Caco-2 (cell line): ENCODE measurements at regions of chr11 and their contacts with region 1.

Region 1: DNA sequence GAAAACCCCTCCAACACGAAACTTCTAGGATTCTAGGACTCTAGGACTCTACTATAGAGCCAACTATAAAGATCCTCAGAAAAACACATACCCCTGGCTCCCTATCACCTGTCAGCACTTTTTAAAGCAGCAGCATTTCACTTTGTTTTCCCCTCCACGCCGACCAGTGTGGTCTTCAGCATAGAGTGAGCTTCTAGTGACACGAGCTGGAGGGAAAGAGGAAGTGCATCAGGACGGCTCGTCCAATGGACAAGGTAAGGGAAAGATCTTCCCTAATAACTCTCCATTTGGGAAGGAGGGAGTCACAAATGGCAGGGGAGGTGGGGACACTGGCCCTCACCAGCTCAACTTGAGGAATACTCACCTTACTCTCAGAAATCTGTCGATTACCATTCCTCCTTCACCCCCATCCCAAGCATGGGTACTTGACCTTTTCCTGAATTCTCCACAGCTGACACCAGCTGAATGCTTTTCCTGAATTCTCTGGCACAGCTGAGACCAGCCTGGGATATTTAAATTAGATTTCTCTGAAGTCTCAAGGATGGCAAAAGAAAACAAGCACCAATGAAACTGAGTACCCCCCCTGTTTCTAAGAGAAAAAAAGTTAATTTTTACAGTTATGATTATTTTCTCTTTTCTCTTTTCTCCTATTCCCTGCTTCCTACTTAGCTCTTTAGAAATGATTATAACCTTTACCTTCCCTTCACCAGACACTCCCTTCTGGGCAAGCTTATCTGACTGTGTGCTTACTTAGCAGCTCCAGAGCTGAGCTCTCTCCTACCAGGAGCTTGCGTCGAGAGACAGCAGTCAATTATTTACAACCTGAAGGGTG is 33.3 kb upstream of the NNMT start:
- DNase-seq: peak; percentile 74 to 77
- H3K4me3 ChIP-seq: no peak overlapping the region
- H3K4me3 Mint-ChIP-seq: no peak overlapping the region
- H3K27ac Mint-ChIP-seq: no peak overlapping the region
- H3K4me1 ChIP-seq: peaks cover 13% of the 10 kb centered on the region
- H3K4me1 Mint-ChIP-seq: no peaks in the 10 kb centered on the region
- H3K27me3 ChIP-seq: 0 out of 2 replicates have a peak, but pooled peaks cover 1% of the 10 kb centered on the region
- H3K27me3 Mint-ChIP-seq: no peaks in the 10 kb centered on the region
- CTCF ChIP-seq: peak; percentile 93 to 96

Region 2: DNA sequence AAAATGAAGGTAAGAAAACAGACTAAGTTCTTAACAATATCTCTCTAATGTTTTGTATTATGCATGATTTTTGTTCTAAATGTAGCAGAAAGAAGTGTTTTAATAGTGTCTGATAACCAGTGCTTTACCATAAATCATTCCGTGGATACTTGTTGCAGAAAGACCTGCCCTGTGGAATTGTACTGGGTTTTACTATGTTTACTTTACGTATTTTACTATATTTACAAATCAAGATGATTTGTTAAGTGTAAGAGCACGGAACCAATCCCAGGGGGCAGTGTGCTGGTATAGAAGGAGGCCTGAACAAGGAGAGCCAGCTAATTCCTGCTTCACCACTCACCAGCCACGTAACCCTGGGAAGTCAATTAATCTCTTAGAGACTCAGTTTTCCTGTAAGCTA is 356.9 kb before region 1 on chr11:
- CTCF ChIA-PET with region 1: interaction called, 14 read pairs
- POLR2A ChIA-PET with region 1: no interaction called
- intact Hi-C with region 1: no loop called
- DNase-seq: peak; percentile 79 to 86
- H3K4me3 ChIP-seq: no peak overlapping the region
- H3K4me3 Mint-ChIP-seq: no peak overlapping the region
- H3K27ac Mint-ChIP-seq: no peak overlapping the region
- H3K4me1 ChIP-seq: peaks cover 17% of the 10 kb centered on the region
- H3K4me1 Mint-ChIP-seq: peaks cover 23% of the 10 kb centered on the region
- H3K27me3 ChIP-seq: no peaks in the 10 kb centered on the region
- H3K27me3 Mint-ChIP-seq: peaks cover 2% of the 10 kb centered on the region
- CTCF ChIP-seq: peak; percentile 73 to 82

Region 3: GRCh38 chr11:114036156-114036811 is 226.6 kb before region 1 on chr11:
- CTCF ChIA-PET with region 1: interaction called, 72 read pairs
- POLR2A ChIA-PET with region 1: no interaction called
- intact Hi-C with region 1: loop called (anchors 1 kb)
- DNase-seq: peak; percentile 93 to 98
- H3K4me3 ChIP-seq: peak overlapping the region; percentile 29
- H3K4me3 Mint-ChIP-seq: peak overlapping the region; percentile 57
- H3K27ac Mint-ChIP-seq: no peak overlapping the region
- H3K4me1 ChIP-seq: peaks cover 33% of the 10 kb centered on the region
- H3K4me1 Mint-ChIP-seq: peaks cover 23% of the 10 kb centered on the region
- H3K27me3 ChIP-seq: no peaks in the 10 kb centered on the region
- H3K27me3 Mint-ChIP-seq: no peaks in the 10 kb centered on the region
- CTCF ChIP-seq: peak; percentile 98 to 99

Region 4: GRCh38 chr11:114115451-114115928 is 147.4 kb before region 1 on chr11:
- CTCF ChIA-PET with region 1: interaction called, 7 read pairs
- POLR2A ChIA-PET with region 1: no interaction called
- intact Hi-C with region 1: loop called (anchors 5 kb)
- DNase-seq: peak; percentile 90 to 91
- H3K4me3 ChIP-seq: no peak overlapping the region
- H3K4me3 Mint-ChIP-seq: peak overlapping the region; percentile 12
- H3K27ac Mint-ChIP-seq: peak overlapping the region; percentile 83
- H3K4me1 ChIP-seq: peaks cover 63% of the 10 kb centered on the region
- H3K4me1 Mint-ChIP-seq: peaks cover 47% of the 10 kb centered on the region
- H3K27me3 ChIP-seq: no peaks in the 10 kb centered on the region
- H3K27me3 Mint-ChIP-seq: no peaks in the 10 kb centered on the region
- CTCF ChIP-seq: peak in 1 of 2 experiments; percentile 73

Region 5: GRCh38 chr11:114197799-114198500 is 64.9 kb before region 1 on chr11:
- CTCF ChIA-PET with region 1: interaction called, 16 read pairs
- POLR2A ChIA-PET with region 1: no interaction called
- intact Hi-C with region 1: loop called (anchors 2 kb)
- DNase-seq: no peak
- H3K4me3 ChIP-seq: no peak overlapping the region
- H3K4me3 Mint-ChIP-seq: no peak overlapping the region
- H3K27ac Mint-ChIP-seq: no peak overlapping the region
- H3K4me1 ChIP-seq: no peaks in the 10 kb centered on the region; the same call in 1 of the 2 replicates
- H3K4me1 Mint-ChIP-seq: peaks cover 7% of the 10 kb centered on the region
- H3K27me3 ChIP-seq: no peaks in the 10 kb centered on the region
- H3K27me3 Mint-ChIP-seq: no peaks in the 10 kb centered on the region
- CTCF ChIP-seq: no peak